Lower lobe of right lung (tissue), 2 donors: ENCODE measurements at regions of chr10 and their contacts with region 1.

Region 1: DNA sequence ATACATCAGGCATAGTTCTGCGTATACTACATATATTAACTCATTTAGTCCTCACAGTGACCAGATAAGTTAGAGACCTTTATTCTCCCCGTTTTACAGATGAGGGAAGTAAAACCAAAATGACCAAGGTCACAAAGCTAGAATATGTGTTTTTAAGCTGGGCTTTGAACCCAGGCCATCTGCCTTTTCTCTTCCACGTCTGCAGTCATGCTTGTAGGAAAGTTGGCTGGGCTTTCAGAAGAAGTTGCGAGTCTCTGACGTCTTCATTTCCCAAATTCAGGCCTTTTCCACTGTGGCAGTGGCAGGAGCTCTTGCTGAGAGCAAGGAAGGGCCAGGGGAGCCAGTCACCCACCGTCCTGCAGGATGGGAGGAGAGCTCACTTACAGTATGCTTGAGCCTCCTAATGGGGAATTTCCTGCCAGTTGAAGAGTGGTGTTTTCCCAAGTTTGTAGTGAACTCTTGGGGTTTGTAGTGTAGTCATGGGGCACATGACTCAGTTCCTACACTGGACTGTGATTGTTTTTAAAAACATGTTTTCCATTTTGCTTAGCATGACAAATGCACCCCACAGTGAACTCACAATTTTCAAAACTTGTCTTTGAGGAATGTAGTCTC is 34.2 kb downstream of the CYP17A1 start:
- DNase-seq: no peak
- ATAC-seq: peak; percentile 73 to 85
- H3K4me3 ChIP-seq: no peak overlapping the region
- H3K27ac ChIP-seq: peak overlapping the region; percentile 67
- H3K4me1 ChIP-seq: peaks cover 56% of the 10 kb centered on the region
- H3K27me3 ChIP-seq: no peaks in the 10 kb centered on the region
- CTCF ChIP-seq: no peak

Region 2: DNA sequence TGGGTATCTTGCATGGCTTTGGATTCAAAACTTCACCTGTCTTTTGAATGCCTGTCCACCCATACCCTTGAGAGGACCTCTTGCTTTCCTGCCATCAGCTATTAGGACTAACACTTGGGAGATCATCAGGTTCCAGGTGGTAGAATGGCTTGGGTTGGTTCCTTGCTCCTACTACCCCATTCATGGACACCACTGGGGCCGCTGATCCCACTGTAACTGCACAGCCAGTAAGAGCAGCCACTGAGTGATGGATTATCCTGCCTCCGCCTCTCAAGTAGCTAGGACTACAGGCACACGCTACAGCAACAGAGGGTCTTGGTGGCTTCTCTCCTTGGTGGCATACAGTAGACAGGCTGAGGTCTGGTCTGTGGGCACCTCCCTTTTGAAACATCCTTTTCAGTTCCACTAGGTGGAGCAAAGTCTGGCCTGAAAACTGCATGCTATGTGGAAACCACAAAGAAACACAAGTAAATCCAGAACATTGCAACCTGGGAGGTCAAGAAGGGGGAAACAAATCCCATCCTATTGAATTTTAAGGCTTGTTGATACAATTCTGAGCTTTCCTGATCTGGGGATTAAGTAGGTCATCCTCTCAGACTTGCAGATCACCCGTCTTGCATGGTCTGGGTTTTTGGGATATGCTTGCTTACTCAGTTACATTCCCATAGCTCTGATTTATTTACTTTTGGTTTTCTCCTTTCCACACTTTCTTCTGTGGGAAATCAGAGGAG is 49.9 kb before region 1 on chr10:
- intact Hi-C with region 1: loop called (anchors 10 kb)
- DNase-seq: no peak
- ATAC-seq: peak; percentile 80 to 82
- H3K4me3 ChIP-seq: no peak overlapping the region
- H3K27ac ChIP-seq: peak overlapping the region; percentile 59
- H3K4me1 ChIP-seq: peaks cover 32% of the 10 kb centered on the region
- H3K27me3 ChIP-seq: no peaks in the 10 kb centered on the region
- CTCF ChIP-seq: peak; percentile 57